CD14-positive monocyte (primary cell): ENCODE measurements at regions of chr3 and their contacts with region 1.

Region 1: GRCh38 chr3:179309225-179310078 is 13.4 kb upstream of the ZNF639 start:
- DNase-seq: no peak
- H3K4me3 ChIP-seq: no peak overlapping the region
- H3K4me3 Mint-ChIP-seq: no peak overlapping the region
- H3K27ac ChIP-seq: no peak overlapping the region
- H3K27ac Mint-ChIP-seq: no peak overlapping the region
- H3K4me1 ChIP-seq: no peaks in the 10 kb centered on the region
- H3K4me1 Mint-ChIP-seq: no peaks in the 10 kb centered on the region
- H3K27me3 ChIP-seq: no peaks in the 10 kb centered on the region
- H3K27me3 Mint-ChIP-seq: peaks cover 0 to 2% (median 0%) of the 10 kb centered on the region in 3 donors
- CTCF ChIP-seq: no peak

Region 2: GRCh38 chr3:179015551-179016020 is 293.9 kb before region 1 on chr3:
- intact Hi-C with region 1: loop called in 1 of 2 experiments (anchors 10 kb)
- DNase-seq: peak; percentile 44 to 68 (median 47)
- H3K4me3 ChIP-seq: no peak overlapping the region
- H3K4me3 Mint-ChIP-seq: no peak overlapping the region
- H3K27ac ChIP-seq: no peak overlapping the region
- H3K27ac Mint-ChIP-seq: no peak overlapping the region
- H3K4me1 ChIP-seq: no peaks in the 10 kb centered on the region
- H3K4me1 Mint-ChIP-seq: peaks cover 9% of the 10 kb centered on the region
- H3K27me3 ChIP-seq: no peaks in the 10 kb centered on the region
- H3K27me3 Mint-ChIP-seq: peaks cover 2 to 4% (median 2%) of the 10 kb centered on the region in 3 donors
- CTCF ChIP-seq: peak; percentile 86

Region 3: DNA sequence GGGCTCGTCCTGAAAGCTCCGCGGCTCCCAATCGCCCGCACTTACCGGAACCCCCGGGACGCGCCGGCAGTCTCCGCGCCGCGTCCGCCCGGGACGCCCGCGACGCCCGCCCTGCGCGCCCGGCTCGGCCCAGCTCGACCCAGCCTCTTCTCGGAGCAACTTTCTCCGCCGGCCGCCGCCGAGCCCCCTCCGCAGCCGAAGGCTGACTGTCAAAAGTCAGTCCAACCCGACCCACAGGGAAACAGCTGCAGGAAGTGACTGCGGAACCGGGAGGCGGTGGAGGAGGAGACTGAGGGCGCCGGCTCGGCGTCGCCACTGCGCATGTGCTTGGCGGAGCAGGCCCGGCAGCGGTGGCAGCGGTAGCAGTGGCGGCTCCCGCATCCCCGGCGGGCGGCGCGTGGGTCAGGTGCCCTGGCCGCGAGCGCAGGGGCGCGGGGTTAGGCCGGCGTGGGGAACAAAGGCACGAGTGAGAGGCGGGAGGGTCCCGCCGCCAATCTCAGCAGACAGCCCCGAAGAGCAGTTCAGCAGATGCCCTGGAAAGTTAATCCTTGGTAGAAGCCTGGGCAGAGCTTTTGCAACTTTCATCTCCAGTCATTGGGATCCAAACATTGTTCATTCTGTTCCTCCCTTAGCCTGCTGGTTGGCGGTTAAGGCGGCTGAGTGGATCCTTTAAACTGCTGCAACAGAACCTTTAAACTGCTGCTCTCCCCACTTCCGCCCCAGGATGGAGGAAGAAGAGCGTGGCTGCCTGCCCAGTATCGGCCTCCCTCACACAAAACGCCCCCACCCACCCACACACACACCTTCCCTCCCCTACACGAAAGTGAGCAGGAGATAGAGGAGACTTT is 237.7 kb before region 1 on chr3 and contains the start of gene ZMAT3:
- intact Hi-C with region 1: loop called in 1 of 2 experiments (anchors 5 kb)
- DNase-seq: peak; percentile 73 to 79 (median 75)
- H3K4me3 ChIP-seq: peak within 1 kb of the TSS; percentile 74 to 95 (median 81)
- H3K4me3 Mint-ChIP-seq: peak within 1 kb of the TSS; percentile 95 to 97
- H3K27ac ChIP-seq: peak within 1 kb of the TSS; percentile 48 to 84
- H3K27ac Mint-ChIP-seq: peak within 1 kb of the TSS; percentile 62 to 84 (median 76)
- H3K4me1 ChIP-seq: peaks cover 10 to 16% of the 10 kb centered on the region in 2 donors
- H3K4me1 Mint-ChIP-seq: peaks cover 25% of the 10 kb centered on the region
- H3K27me3 ChIP-seq: no peaks in the 10 kb centered on the region
- H3K27me3 Mint-ChIP-seq: no peaks in the 10 kb centered on the region
- CTCF ChIP-seq: no peak
- polyA plus RNA-seq, gene ZMAT3: 3.9 to 9.9 (median 7.9) TPM